ENCODE measurements at regions of chr7 and their contacts with region 1.

Region 1: GRCh38 chr7:103660455-103661371 is 214.7 kb upstream of the SLC26A5 start:
- DNase-seq: peak; percentile 83
- ATAC-seq: peak; percentile 80
- H3K4me3 ChIP-seq: no peak overlapping the region
- H3K27ac ChIP-seq: peak overlapping the region; percentile 56
- H3K4me1 ChIP-seq: peaks cover 15% of the 10 kb centered on the region
- H3K27me3 ChIP-seq: no peaks in the 10 kb centered on the region
- CTCF ChIP-seq: no peak

Region 2: DNA sequence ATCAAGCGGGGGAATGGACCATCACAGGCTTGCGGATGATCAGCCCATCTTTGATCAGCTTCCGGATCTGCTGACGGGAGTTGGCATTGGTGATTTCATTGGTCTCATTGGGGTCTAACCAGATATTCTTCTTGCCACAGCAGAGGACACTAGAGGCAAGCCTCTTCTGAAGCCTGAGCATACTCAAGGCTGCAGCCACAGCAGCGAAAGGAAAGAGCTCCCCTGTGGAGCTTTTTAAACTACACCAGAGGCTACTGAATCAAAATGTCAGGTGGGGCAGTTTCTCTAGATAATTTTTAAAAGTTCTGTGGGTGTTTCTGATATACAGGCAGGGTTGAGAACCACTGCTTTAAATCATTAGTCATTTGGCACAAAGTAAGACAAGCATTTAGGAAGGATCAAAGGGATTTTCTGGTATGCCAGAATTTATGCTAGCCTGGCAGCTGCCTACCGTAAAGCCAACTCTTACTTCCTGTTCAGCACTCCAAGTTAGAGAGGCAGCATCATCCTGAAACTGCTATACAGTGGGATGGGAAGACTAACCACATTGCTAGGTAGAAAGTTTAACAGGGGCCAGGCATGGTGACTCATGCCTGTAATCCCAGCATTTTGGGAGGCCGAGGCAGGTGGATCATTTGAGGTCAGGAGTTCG is 518.8 kb before region 1 on chr7:
- CTCF ChIA-PET with region 1: no interaction called
- POLR2A ChIA-PET with region 1: no interaction called
- intact Hi-C with region 1: no loop called
- DNase-seq: peak; percentile 86
- ATAC-seq: peak; percentile 88
- H3K4me3 ChIP-seq: peak overlapping the region; percentile 28; the same call in 1 of the 2 replicates
- H3K27ac ChIP-seq: peak overlapping the region; percentile 93
- H3K4me1 ChIP-seq: peaks cover 38% of the 10 kb centered on the region
- H3K27me3 ChIP-seq: no peaks in the 10 kb centered on the region
- CTCF ChIP-seq: no peak

Region 3: DNA sequence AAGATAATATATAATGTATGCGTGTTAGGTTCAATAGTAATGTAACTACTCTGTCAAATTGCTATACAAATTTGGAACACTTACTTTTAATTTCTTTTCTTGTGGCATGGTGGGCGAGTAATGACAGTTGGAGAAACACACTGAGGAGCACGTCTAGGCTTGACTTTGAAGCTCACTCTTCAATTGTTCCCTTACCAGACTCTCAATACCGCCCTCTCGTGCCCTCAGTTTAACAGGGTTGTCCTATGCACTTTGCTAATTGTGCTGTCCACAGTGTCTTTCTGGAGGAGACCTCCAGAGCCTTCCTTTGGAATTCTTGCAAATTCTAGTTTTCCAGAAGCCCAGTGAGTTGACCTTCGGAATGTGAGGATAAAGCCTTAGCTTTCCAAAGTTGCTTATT is 436.0 kb after region 1 on chr7:
- CTCF ChIA-PET with region 1: no interaction called
- POLR2A ChIA-PET with region 1: no interaction called
- intact Hi-C with region 1: loop called (anchors 1 kb)
- DNase-seq: peak; percentile 63
- ATAC-seq: peak; percentile 93
- H3K4me3 ChIP-seq: no peak overlapping the region
- H3K27ac ChIP-seq: no peak overlapping the region
- H3K4me1 ChIP-seq: no peaks in the 10 kb centered on the region
- H3K27me3 ChIP-seq: no peaks in the 10 kb centered on the region
- CTCF ChIP-seq: peak; percentile 54

Region 4: GRCh38 chr7:104538152-104538551 is 877.4 kb after region 1 on chr7:
- CTCF ChIA-PET with region 1: no interaction called
- POLR2A ChIA-PET with region 1: no interaction called
- intact Hi-C with region 1: no loop called
- DNase-seq: no peak
- ATAC-seq: no peak
- H3K4me3 ChIP-seq: no peak overlapping the region
- H3K27ac ChIP-seq: no peak overlapping the region
- H3K4me1 ChIP-seq: no peaks in the 10 kb centered on the region
- H3K27me3 ChIP-seq: peaks cover 10% of the 10 kb centered on the region; the same call in 1 of the 2 replicates
- CTCF ChIP-seq: no peak